ENCODE measurements at regions of chr4 and their contacts with region 1.

Region 1: DNA sequence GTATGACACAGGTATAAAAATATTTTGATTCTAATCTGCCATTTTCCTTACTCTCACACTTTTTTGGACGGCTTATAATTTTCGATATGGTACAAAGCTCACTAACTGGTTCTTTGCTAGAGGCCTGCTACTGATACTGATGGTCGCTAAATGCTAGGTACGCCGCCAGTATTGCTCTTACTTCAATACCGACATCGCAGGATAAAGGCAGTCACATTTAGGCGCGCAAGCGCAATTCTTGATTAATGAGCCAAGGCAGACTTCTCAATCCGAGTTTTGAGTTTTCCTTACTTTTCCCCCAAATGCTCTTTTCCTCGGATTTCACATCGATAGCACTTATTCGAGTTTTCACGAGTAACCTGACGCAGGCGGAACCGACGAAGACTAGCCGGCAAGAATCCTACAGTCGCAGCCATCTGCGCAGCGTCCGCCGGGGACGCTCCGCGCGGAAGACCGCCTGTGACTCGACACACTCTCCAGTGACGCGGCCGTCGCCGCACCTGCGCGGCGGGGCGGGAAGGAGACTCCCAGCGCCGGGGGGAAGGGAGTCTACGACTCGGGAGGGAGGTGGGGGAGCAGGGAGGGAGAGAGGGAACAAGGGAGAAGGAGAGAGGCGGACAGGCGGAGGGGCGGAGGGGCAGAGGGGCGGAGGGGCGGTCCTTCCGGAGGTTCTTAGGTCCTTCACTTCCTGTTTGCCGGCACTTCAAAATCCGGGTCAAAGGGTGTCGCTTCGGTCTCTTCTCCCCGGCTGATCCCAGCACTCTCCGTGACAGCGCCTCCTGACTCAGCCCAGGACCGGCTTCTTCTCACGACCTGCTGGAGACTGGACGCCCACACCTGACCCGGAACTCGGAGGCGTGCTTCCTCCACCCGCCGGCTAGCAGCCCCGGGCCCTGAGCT is at the start of gene USP38:
- DNase-seq: peak; percentile 83 to 94 (median 86)
- H3K4me3 ChIP-seq: peak within 1 kb of the TSS; percentile 59 to 79
- H3K4me3 Mint-ChIP-seq: peak within 1 kb of the TSS; percentile 87 to 96 (median 94)
- H3K27ac ChIP-seq: peak within 1 kb of the TSS; percentile 93
- H3K27ac Mint-ChIP-seq: peak within 1 kb of the TSS; percentile 95 to 99 (median 98)
- H3K4me1 ChIP-seq: peaks cover 49% of the 10 kb centered on the region
- H3K4me1 Mint-ChIP-seq: peaks cover 35 to 63% (median 49%) of the 10 kb centered on the region in 4 donors
- H3K27me3 ChIP-seq: no peaks in the 10 kb centered on the region
- H3K27me3 Mint-ChIP-seq: no peaks in the 10 kb centered on the region
- total RNA-seq, gene USP38: 25.8 to 26.4 TPM

Region 2: DNA sequence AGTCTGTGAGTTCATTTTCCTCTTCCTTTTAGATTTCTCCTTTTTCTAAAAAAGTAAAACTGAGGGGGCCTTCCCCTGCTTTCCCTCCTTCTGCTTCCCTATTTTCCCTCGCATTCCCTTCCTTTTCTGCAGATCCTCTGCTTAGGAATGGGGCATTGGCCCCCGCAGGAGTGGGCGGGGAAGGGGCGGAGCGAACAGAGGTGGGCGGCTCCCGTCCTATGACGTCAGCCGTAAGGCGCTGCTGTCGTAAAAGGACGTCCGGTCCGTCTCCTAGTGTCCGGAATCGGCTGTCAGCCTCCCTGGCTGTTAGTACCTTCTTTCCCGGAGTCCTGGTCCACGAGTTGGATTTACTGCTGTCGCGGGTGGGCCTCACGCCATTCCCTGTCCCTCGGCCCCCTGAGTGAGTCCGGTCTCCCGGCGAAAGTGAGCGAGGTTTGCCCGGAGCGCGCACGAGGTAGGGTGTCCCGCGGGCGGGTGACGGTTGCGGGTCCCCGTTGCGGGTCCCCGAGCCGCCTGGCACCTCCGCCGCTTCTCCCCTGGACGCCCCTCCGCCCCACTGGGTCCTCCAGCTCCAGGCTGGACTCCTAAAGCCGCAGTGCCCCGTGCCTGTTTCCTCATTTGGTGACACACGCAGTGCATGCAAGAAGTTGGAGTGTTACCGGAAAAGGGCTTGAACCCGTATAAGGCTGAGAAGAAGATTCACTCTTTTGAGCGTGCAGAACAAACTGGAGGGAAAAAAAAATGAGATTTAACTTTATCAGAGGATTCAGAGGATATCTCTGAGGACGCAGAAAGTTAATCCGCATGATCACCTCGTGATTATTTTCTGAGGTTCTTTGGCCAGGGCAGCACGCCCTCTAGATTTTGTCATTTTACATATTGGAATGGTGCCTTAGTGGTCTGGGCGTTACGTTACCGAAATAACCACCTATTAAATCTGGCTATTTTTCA is 1963.5 kb before region 1 on chr4 and contains the start of gene ZNF330:
- CTCF ChIA-PET with region 1: no interaction called
- POLR2A ChIA-PET with region 1: no interaction called
- intact Hi-C with region 1: loop called (anchors 2 kb)
- DNase-seq: peak; percentile 81 to 92 (median 87)
- H3K4me3 ChIP-seq: peak within 1 kb of the TSS; percentile 42 to 95
- H3K4me3 Mint-ChIP-seq: peak within 1 kb of the TSS; percentile 96 to 99 (median 98)
- H3K27ac ChIP-seq: peak within 1 kb of the TSS; percentile 92
- H3K27ac Mint-ChIP-seq: peak within 1 kb of the TSS; percentile 93 to 99 (median 97)
- H3K4me1 ChIP-seq: peaks cover 22% of the 10 kb centered on the region
- H3K4me1 Mint-ChIP-seq: peaks cover 27 to 49% (median 37%) of the 10 kb centered on the region in 4 donors
- H3K27me3 ChIP-seq: no peaks in the 10 kb centered on the region
- H3K27me3 Mint-ChIP-seq: no peaks in the 10 kb centered on the region
- total RNA-seq, gene ZNF330: 39.8 to 45.3 TPM

Region 3: DNA sequence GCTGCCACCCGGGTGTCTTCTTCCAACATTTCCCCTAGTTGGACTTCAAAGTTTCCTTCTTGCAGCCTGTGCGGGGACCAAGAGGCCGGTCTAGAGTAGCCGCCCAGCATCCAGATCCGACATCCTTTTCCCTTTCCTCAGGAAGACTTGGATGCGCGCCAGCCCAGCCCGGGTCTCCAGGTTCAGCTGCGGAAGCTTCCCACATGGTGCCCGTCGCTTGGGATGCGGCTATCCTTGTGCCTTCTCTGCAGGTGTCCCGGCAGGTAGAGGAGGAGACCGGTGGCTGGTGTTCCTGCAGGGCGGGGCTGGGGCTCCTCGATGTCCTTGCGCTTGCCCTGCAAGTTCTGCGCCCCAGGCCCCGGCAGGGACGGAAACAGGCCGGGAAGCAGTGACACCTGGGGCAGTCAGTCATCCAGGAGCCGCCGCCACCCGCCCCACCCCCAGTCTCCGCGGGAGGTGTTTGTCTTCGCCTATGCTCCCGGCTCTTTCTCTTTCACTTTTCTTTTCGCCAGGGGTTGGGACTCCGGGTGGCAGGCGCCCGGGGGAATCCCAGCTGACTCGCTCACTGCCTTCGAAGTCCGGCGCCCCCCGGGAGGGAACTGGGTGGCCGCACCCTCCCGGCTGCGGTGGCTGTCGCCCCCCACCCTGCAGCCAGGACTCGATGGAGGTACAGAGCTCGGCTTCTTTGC is 1548.2 kb before region 1 on chr4 and contains the start of gene IL15:
- CTCF ChIA-PET with region 1: no interaction called
- POLR2A ChIA-PET with region 1: no interaction called
- intact Hi-C with region 1: loop called (anchors 10 kb)
- DNase-seq: peak; percentile 63 to 85 (median 68)
- H3K4me3 ChIP-seq: peak within 1 kb of the TSS; percentile 50 to 84
- H3K4me3 Mint-ChIP-seq: peak within 1 kb of the TSS; percentile 94 to 98 (median 97)
- H3K27ac ChIP-seq: peak within 1 kb of the TSS; percentile 57
- H3K27ac Mint-ChIP-seq: peak within 1 kb of the TSS; percentile 71 to 98 (median 90)
- H3K4me1 ChIP-seq: peaks cover 18% of the 10 kb centered on the region
- H3K4me1 Mint-ChIP-seq: peaks cover 19 to 30% (median 26%) of the 10 kb centered on the region in 4 donors
- H3K27me3 ChIP-seq: no peaks in the 10 kb centered on the region
- H3K27me3 Mint-ChIP-seq: no peaks in the 10 kb centered on the region
- total RNA-seq, gene IL15: 4.7 to 6.1 TPM

Region 4: GRCh38 chr4:143148521-143148920 is 35.9 kb before region 1 on chr4:
- CTCF ChIA-PET with region 1: no interaction called
- POLR2A ChIA-PET with region 1: no interaction called
- intact Hi-C with region 1: no loop called
- DNase-seq: no peak
- H3K4me3 ChIP-seq: no peak overlapping the region
- H3K4me3 Mint-ChIP-seq: no peak overlapping the region
- H3K27ac ChIP-seq: no peak overlapping the region
- H3K27ac Mint-ChIP-seq: no peak overlapping the region
- H3K4me1 ChIP-seq: no peaks in the 10 kb centered on the region
- H3K4me1 Mint-ChIP-seq: no peaks in the 10 kb centered on the region
- H3K27me3 ChIP-seq: no peaks in the 10 kb centered on the region
- H3K27me3 Mint-ChIP-seq: no peaks in the 10 kb centered on the region

Region 5: DNA sequence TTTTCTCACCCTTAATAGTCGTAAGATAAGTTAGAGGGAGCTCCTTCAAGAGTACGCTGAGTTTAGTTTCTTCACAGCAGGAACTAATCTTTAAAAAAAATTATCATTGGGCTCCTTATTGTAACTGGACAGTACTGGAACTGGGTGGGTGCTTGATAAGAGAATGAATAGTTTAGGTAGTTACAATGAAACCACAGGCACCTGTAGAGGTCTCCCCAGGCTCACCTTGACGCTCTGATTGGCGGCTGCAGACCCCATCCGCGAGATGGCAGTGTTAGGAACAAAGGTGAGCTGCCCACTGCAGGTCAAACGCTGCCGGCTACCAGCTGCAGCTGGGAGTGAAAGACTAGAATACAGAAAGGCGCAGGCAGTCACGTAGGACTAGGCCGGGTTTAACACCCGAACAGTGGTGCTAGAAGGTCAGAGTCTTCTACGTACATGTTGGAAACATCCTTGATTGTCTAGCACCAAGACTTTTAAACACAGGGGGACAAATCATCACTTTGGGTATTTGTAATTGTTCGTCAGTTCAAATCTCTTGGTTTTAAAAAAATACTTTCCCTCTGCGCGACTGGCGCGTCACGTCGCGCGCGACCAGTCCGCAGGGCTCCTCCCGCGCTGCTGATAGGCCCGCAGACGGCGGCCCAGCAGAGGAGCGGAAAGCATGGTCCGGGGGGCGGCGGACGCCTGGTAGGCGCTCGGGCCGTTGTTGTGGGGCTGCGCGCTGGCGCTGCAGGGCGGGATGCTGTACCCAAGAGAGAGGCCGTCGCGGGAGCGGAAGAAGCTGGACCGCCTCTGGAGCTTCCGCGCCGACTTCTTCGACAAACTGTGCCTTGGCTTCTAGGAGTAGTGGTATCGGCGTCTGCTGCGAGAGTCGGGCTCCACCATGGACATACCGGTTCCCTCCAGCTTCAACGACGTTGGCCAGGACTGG is 374.6 kb after region 1 on chr4:
- CTCF ChIA-PET with region 1: no interaction called
- POLR2A ChIA-PET with region 1: no interaction called
- intact Hi-C with region 1: loop called (anchors 10 kb)
- DNase-seq: peak; percentile 68 to 80 (median 77)
- H3K4me3 ChIP-seq: peak overlapping the region; percentile 64 to 78
- H3K4me3 Mint-ChIP-seq: peak overlapping the region; percentile 91 to 98 (median 95)
- H3K27ac ChIP-seq: peak overlapping the region; percentile 46
- H3K27ac Mint-ChIP-seq: peak overlapping the region; percentile 92 to 98 (median 97)
- H3K4me1 ChIP-seq: peaks cover 19% of the 10 kb centered on the region
- H3K4me1 Mint-ChIP-seq: peaks cover 10 to 29% (median 20%) of the 10 kb centered on the region in 4 donors
- H3K27me3 ChIP-seq: no peaks in the 10 kb centered on the region
- H3K27me3 Mint-ChIP-seq: no peaks in the 10 kb centered on the region

Measured in CD4-positive, alpha-beta memory T cell (primary cell).